B cell (primary cell): ENCODE measurements at regions of chr12 and their contacts with region 1.

Region 1: GRCh38 chr12:25041006-25041741 is 92.3 kb upstream of the BCAT1 start:
- DNase-seq: no peak
- ATAC-seq: no peak
- H3K4me3 ChIP-seq: no peak overlapping the region
- H3K4me3 Mint-ChIP-seq: peak overlapping the region; percentile 33
- H3K27ac ChIP-seq: no peak overlapping the region
- H3K27ac Mint-ChIP-seq: peak overlapping the region; percentile 28
- H3K4me1 ChIP-seq: peaks cover 10 to 21% of the 10 kb centered on the region in 2 donors
- H3K4me1 Mint-ChIP-seq: peaks cover 31% of the 10 kb centered on the region
- H3K27me3 ChIP-seq: no peaks in the 10 kb centered on the region
- H3K27me3 Mint-ChIP-seq: no peaks in the 10 kb centered on the region
- CTCF ChIP-seq: no peak

Region 2: DNA sequence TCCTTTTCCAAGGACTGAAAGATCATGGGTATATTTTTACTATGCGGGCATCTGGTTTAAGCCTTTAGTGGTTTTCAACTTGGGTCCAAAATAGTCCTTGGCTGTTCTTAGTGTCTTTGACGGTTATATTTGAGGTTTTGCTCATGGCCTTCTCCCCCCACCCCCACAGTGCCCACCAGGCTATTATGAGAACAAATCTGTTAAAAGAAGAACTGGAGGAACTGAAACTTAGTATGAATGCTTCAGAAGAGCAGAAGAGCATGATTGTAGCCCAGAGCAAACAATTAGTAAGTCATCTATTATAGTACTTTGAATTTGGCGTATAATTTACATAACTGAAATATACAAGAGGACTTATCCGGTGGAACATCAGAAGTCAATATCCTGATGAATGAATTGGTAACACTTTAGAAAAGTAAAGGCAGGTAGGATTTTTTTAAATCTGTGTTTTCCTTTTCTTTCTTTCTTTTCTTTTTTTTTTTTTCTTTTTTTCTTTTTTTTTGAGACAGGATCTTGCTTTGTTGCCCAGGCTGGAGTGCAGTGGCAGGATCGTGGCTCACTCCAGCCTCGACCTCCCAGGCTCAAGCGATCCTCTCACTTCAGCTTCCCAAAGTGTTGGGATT is 20.4 kb before region 1 on chr12:
- CTCF ChIA-PET with region 1: interaction called, 6 read pairs
- POLR2A ChIA-PET with region 1: no interaction called
- intact Hi-C with region 1: loop called (anchors 1 kb)
- DNase-seq: peak; percentile 67
- ATAC-seq: peak; percentile 86
- H3K4me3 ChIP-seq: peak overlapping the region in 2 of 5 experiments; percentile 8 to 37
- H3K4me3 Mint-ChIP-seq: peak overlapping the region; percentile 67
- H3K27ac ChIP-seq: peak overlapping the region; percentile 59 to 68
- H3K27ac Mint-ChIP-seq: peak overlapping the region; percentile 81
- H3K4me1 ChIP-seq: peaks cover 69 to 72% of the 10 kb centered on the region in 2 donors
- H3K4me1 Mint-ChIP-seq: peaks cover 58% of the 10 kb centered on the region
- H3K27me3 ChIP-seq: no peaks in the 10 kb centered on the region
- H3K27me3 Mint-ChIP-seq: no peaks in the 10 kb centered on the region
- CTCF ChIP-seq: no peak